Pancreas (tissue), 10 donors: ENCODE measurements at regions of chr15 and their contacts with region 1.

Region 1: GRCh38 chr15:92069308-92070250 is 216.1 kb downstream of the SLCO3A1 start:
- DNase-seq: peak in 1 of 6 donors; percentile 52
- ATAC-seq: peak in 3 of 4 donors; percentile 73 to 91 (median 85)
- H3K4me3 ChIP-seq: no peak overlapping the region
- H3K27ac ChIP-seq: peak overlapping the region in 2 of 4 donors; percentile 52 to 62
- H3K4me1 ChIP-seq: no peaks in the 10 kb centered on the region
- H3K27me3 ChIP-seq: no peaks in the 10 kb centered on the region
- CTCF ChIP-seq: no peak

Region 2: GRCh38 chr15:91302588-91303439 is 766.8 kb before region 1 on chr15:
- intact Hi-C with region 1: no loop called
- DNase-seq: peak in 4 of 6 donors; percentile 13 to 34 (median 28)
- ATAC-seq: peak in 3 of 4 donors; percentile 85 to 95 (median 88)
- H3K4me3 ChIP-seq: no peak overlapping the region
- H3K27ac ChIP-seq: no peak overlapping the region
- H3K4me1 ChIP-seq: no peaks in the 10 kb centered on the region
- H3K27me3 ChIP-seq: peaks cover 0 to 3% (median 0%) of the 10 kb centered on the region in 4 donors
- CTCF ChIP-seq: peak; percentile 23 to 67 (median 52)

Region 3: GRCh38 chr15:91717811-91718210 is 351.8 kb before region 1 on chr15:
- intact Hi-C with region 1: no loop called
- DNase-seq: no peak
- ATAC-seq: no peak
- H3K4me3 ChIP-seq: no peak overlapping the region
- H3K27ac ChIP-seq: no peak overlapping the region
- H3K4me1 ChIP-seq: no peaks in the 10 kb centered on the region
- H3K27me3 ChIP-seq: peaks cover 0 to 4% (median 0%) of the 10 kb centered on the region in 4 donors
- CTCF ChIP-seq: no peak

Region 4: DNA sequence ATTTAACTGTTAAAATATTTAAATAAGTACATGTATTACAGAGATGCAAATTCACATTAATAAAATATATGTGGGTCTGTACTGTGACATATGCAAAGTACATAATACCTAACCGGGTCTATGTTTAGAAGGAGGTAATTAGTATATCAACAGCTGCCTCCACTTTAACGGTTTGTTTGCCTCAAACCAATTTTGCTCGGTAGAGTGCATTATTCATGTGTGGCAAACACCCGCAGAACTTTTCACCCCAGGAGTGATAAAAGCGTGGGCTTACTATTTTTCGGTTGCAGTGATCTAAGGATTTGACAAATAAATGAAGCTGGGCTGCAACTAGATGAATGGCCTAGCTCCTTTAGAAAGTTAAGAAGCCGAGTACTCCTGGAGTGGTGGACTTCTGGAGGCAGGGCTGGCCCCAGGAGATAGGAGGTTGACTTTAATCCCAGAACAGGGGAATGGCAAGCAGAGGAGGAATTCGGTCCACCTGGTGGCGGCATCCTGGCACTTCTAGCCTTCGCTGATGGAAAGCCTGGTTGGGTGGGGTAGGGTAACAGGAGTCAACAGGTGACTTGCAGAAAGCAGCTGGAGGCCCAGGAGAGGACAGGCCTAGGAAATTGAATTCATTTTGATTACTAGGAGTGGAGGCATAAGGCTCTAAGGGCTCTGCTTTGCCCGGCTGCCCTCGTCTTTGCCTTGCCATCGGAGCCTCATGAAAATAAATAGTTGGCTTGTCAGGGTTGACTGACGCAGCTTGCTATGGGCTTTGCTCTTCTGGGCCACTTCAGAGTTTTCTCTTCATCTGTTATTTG is 213.7 kb before region 1 on chr15:
- intact Hi-C with region 1: loop called in 1 of 3 experiments (anchors 5 kb)
- DNase-seq: peak in 1 of 6 donors; percentile 29
- ATAC-seq: peak in 1 of 4 donors; percentile 5
- H3K4me3 ChIP-seq: no peak overlapping the region
- H3K27ac ChIP-seq: no peak overlapping the region
- H3K4me1 ChIP-seq: peaks cover 0 to 6% (median 5%) of the 10 kb centered on the region in 3 donors
- H3K27me3 ChIP-seq: no peaks in the 10 kb centered on the region
- CTCF ChIP-seq: no peak